ENCODE measurements at regions of chr4 and their contacts with region 1.

Region 1: DNA sequence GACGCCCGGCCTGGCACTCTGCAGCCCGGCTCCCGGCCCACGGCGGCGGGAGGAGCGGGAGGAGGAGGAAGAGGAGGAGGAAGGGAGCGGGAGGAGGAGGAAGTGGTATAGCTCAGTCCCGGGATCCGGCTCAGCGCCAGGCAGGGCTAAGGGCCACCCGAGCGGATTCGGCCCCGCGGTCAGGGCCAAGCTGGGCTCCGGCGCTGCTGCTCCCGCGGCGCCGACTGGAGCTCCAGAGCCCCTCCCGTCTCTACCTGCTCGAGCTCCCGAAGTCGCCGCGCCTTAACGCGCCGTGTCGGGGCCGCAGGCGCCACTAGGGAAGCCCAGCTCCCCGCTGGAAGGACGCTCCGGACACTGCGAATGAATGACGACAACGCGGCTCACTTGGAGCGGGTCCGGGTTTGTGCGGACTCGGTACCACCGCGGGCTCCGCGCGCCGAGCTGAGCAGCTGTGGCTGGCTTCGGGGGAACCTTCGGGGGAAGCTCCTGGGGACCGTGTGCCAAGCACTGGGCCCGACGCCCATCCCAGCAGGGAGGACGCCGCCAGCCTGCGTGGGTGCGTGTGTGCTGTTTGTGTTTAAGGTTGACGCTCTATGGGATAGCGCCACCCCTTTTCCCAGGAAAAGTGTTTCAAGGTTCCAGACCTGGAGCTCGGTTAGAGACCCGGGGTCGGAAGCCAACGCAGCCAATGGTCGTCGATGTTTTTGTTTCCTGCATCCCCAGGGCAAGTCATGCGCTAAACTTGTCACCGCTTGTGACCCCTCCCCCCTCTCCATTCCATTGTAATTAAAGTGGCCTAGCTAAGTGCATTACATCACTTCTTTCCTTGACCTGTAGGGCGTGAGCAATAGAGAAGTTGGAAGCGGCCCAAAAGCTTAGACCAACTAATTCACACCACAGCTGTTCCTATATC is at the start of gene TBC1D9:
- DNase-seq: peak; percentile 82 to 93 (median 91)
- ATAC-seq: peak; percentile 90 to 92
- H3K4me3 ChIP-seq: peak within 1 kb of the TSS; percentile 70
- H3K27ac ChIP-seq: peak within 1 kb of the TSS; percentile 94
- H3K4me1 ChIP-seq: no peaks in the 10 kb centered on the region
- H3K27me3 ChIP-seq: no peaks in the 10 kb centered on the region
- total RNA-seq, gene TBC1D9: 10.2 to 13.6 (median 12.7) TPM

Region 2: DNA sequence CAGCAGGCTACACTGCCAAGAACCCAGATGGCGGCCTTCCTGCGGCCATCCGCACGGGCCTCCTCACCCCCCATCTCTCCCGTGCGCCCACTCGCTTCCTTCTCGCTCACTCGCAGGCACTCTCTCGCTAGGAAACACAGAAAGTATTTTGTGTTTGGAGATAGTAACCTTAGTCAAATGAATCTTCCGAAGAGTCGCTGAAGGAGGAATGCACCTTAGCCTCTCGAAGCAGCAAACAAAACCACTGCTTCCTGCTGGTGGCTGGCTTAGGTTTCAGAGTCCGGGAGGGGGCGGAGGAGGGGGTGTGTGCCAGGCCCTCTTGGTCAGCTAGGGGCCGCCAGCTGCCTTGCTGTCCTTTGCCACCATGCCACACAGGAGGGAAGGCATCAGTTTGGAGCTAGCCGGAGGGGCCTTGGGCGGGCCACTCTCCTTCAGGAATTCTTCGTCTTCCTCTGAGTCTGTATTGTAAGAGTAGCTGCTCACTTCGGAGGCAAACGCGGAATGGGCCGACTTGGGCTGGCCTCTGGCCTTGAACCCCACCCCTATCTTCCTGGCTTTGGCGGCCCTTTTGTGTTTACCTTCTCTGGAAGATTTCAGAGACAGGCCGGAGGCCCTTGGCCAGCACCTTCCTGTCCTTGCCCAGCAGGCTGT is 114.7 kb before region 1 on chr4:
- intact Hi-C with region 1: loop called in 1 of 4 experiments (anchors 10 kb)
- DNase-seq: peak; percentile 35 to 74 (median 69)
- ATAC-seq: peak; percentile 52 to 71
- H3K4me3 ChIP-seq: peak overlapping the region; percentile 31
- H3K27ac ChIP-seq: peak overlapping the region; percentile 21
- H3K4me1 ChIP-seq: no peaks in the 10 kb centered on the region
- H3K27me3 ChIP-seq: no peaks in the 10 kb centered on the region

Measured in right cardiac atrium (tissue), 5 donors.